Activated T-helper 1 cell treated with anti-CD3 and anti-CD28 coated beads, Interleukin-12 subunit alpha, Interleukin-12 subunit beta, Interleukin-2, Interleukin-4 antibody, amounts not matched to agents 30 ng/mL and 10 ng/mL and 1 ng/mL, durations not matched to agents 14 hours and 24 hours and 36 hours (primary cell): ENCODE measurements at regions of chr3 and their contacts with region 1.

Region 1: GRCh38 chr3:142828703-142829305 is 60.1 kb downstream of the PCOLCE2 start:
- DNase-seq: peak; percentile 44
- H3K4me3 Mint-ChIP-seq: no peak overlapping the region
- H3K27ac Mint-ChIP-seq: no peak overlapping the region
- H3K4me1 Mint-ChIP-seq: no peaks in the 10 kb centered on the region
- H3K27me3 Mint-ChIP-seq: peaks cover 8% of the 10 kb centered on the region

Region 2: GRCh38 chr3:142987080-142987700 is 158.4 kb after region 1 on chr3:
- intact Hi-C with region 1: loop called (anchors 1 kb)
- DNase-seq: no peak
- H3K4me3 Mint-ChIP-seq: no peak overlapping the region
- H3K27ac Mint-ChIP-seq: no peak overlapping the region
- H3K4me1 Mint-ChIP-seq: peaks cover 7% of the 10 kb centered on the region
- H3K27me3 Mint-ChIP-seq: peaks cover 20% of the 10 kb centered on the region

Region 3: GRCh38 chr3:142993958-142994442 is 165.2 kb after region 1 on chr3:
- intact Hi-C with region 1: loop called (anchors 1 kb)
- DNase-seq: peak; percentile 39
- H3K4me3 Mint-ChIP-seq: no peak overlapping the region
- H3K27ac Mint-ChIP-seq: peak overlapping the region; percentile 4
- H3K4me1 Mint-ChIP-seq: peaks cover 8% of the 10 kb centered on the region
- H3K27me3 Mint-ChIP-seq: peaks cover 14% of the 10 kb centered on the region